HepG2 (cell line): ENCODE measurements at regions of chr4 and their contacts with region 1.

Region 1: DNA sequence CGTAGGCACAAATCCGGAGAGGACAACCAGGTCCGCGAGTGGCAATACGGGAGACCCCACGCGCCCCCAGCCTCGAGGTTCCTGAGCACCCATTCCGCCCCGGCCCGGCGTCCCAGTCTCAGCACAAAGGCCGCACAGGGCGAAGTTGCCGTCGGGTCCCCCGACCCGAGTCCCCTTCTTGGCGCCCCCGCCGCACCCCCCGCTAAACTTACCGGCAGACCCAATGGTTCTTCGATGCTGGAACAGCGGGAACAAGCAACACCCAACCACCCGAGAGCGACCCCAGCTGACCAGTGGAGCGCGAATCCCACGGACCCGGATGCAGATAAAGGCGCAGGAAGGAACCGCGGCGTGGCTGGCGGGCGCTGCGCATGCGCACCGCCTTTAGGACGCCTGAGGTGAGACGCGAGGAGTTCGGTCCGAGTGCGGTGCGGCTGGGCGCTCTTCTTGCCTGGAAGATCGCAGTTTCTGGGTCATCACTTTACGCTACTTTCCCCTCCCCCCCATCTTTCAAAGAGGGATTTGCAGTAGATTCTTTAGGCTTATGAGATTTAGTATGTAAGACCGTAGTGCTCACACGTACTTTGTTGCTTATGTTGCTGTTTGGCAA is at the start of gene GNPDA2:
- DNase-seq: peak; percentile 85
- ATAC-seq: peak; percentile 96
- H3K4me3 ChIP-seq: peak within 1 kb of the TSS; percentile 66 to 82 (median 70)
- H3K27ac ChIP-seq: peak within 1 kb of the TSS; percentile 51
- H3K4me1 ChIP-seq: peaks cover 16% of the 10 kb centered on the region; the same call in 1 of the 2 replicates
- H3K27me3 ChIP-seq: no peaks in the 10 kb centered on the region; a peak in 1 of 5 replicates
- CTCF ChIP-seq: peak; percentile 79
- EP300 ChIP-seq: no peak
- POLR2A ChIP-seq: peak; percentile 52 to 90
- RAD21 ChIP-seq: no peak
- total RNA-seq, gene GNPDA2: 9.0 and 11.5 TPM in 2 replicates

Region 2: DNA sequence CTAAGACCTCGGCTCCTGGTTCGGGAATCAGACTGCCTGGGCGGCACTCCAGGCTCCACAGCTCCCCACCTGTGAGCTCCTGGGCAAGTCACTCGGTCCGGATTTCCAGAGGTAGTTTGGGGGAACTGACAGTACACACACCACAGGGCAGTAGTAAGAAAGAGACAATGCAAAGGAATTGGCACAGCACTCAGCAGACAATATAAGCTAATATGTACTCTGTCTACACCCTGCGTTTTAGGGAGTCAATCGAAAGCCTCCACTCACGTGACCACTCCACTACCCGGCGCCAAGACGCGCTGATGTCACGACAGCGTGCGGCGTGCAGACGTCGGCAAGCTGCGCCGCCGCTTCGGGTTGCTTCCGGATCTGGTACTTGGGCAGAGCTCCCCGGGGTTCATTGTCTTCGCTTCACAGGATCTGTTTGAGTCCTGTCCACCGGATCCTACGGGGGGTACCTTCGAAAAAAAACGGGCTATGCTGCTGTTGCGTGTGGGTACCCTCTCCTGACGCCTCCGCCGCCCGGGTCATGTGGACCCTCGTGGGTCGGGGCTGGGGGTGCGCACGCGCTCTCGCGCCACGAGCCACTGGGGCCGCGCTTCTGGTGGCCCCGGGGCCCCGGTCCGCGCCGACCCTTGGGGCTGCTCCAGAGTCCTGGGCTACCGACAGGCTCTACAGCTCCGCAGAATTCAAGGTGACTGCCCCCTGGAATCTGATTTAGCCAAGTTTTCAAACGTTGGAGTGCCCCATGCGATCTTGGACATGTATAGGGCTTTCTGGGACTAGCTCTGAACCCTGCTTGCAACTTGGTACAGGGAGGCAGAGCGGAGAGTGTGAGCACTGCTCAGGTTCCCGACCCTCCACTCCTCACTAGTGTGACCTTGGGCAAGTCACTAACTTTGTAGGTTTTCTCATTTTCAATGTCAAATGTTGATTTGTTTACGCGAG is 48.0 kb before region 1 on chr4 and contains the start of gene GUF1:
- CTCF ChIA-PET with region 1: no interaction called
- POLR2A ChIA-PET with region 1: interaction called, 27 read pairs
- in situ Hi-C with region 1: no loop called
- intact Hi-C with region 1: loop called (anchors 1 kb)
- DNase-seq: peak; percentile 85
- ATAC-seq: peak; percentile 94
- H3K4me3 ChIP-seq: peak within 1 kb of the TSS; percentile 67 to 90 (median 87)
- H3K27ac ChIP-seq: peak within 1 kb of the TSS; percentile 93
- H3K4me1 ChIP-seq: peaks cover 24% of the 10 kb centered on the region
- H3K27me3 ChIP-seq: no peaks in the 10 kb centered on the region; a peak in 1 of 5 replicates
- CTCF ChIP-seq: no peak
- EP300 ChIP-seq: no peak
- POLR2A ChIP-seq: peak; percentile 84 to 96
- RAD21 ChIP-seq: no peak; the same call in 1 of the 2 replicates
- total RNA-seq, gene GUF1: 24.6 and 26.6 TPM in 2 replicates